GM12878 (cell line): ENCODE measurements at regions of chr5 and their contacts with region 1.

Region 1: GRCh38 chr5:136062366-136063274 is 33.8 kb downstream of the TGFBI start:
- DNase-seq: no peak
- ATAC-seq: peak; percentile 91
- H3K4me3 ChIP-seq: no peak overlapping the region
- H3K27ac ChIP-seq: no peak overlapping the region
- H3K4me1 ChIP-seq: no peaks in the 10 kb centered on the region
- H3K27me3 ChIP-seq: no peaks in the 10 kb centered on the region; a peak in 2 of 4 replicates
- CTCF ChIP-seq: peak; percentile 57 to 65 (median 60)
- EP300 ChIP-seq: no peak
- POLR2A ChIP-seq: no peak
- RAD21 ChIP-seq: peak; percentile 79

Region 2: DNA sequence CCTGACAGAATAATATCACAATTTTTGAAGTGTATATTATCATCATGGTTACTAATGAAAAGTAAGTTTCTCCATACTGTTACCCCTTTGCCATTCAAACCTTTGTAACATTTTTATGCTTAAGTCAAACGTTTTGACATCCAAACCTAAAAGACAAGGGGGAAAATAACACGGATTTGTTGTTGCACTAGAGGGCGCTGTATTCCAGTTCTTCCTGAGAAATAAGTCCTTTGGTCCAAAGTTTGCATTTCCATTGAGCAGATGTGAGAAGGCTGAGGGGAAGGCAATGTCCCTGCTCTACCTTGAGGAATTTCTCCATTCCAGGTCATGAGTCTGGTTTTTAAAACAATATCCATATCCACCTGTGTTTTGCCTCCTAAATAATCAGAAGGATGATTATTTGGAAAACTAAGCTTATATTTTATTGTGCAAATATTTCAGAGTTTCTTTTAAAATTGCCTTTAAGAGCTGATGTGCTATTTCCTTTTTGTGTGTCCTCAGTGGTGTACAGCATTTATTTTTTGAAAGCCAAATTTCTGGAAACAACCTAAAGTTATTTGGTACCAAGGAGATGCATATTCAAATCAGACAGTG is 117.6 kb before region 1 on chr5:
- CTCF ChIA-PET with region 1: interaction called, 26 read pairs
- POLR2A ChIA-PET with region 1: no interaction called
- RAD21 ChIA-PET with region 1: interaction called, 12 read pairs
- SMC1A ChIA-PET with region 1: interaction called, 9 read pairs
- in situ Hi-C with region 1: no loop called
- intact Hi-C with region 1: loop called (anchors 1 kb)
- DNase-seq: no peak
- ATAC-seq: peak; percentile 70
- H3K4me3 ChIP-seq: no peak overlapping the region
- H3K27ac ChIP-seq: no peak overlapping the region
- H3K4me1 ChIP-seq: no peaks in the 10 kb centered on the region
- H3K27me3 ChIP-seq: no peaks in the 10 kb centered on the region; a peak in 2 of 4 replicates
- CTCF ChIP-seq: peak; percentile 60 to 77 (median 66)
- EP300 ChIP-seq: no peak
- POLR2A ChIP-seq: no peak
- RAD21 ChIP-seq: peak; percentile 74

Region 3: DNA sequence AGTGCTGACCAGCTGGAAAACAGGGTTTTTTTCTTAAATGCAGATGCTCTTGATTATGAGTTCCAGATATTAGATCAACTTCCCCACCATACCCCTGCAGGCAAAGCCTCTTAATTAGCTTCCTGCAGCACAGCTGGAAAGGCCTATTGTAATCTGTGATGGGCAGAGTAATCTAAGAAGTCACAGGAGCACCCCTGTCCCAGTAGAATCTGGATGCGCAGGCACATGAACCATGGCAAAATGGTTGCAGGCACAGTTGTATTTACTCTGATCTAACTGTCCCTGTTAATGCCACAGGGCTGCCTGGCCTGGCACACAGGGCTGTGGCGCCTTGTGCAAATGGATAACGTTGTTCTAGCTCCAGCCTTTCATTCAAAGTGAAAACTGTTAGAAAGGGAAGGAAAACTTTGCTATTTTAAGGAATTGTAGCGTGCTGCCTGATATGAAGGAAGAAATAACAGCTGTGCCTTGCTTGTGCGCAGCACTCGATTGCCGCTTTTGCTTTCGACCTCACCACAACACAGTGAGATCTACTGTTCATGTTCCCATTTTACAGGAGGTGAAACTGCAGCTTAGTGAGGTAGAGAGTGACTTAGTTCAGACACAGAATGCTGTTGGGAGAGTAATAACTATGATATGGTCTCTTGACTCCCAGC is 31.5 kb before region 1 on chr5:
- CTCF ChIA-PET with region 1: interaction called, 10 read pairs
- POLR2A ChIA-PET with region 1: no interaction called
- RAD21 ChIA-PET with region 1: interaction called, 7 read pairs
- SMC1A ChIA-PET with region 1: interaction called, 14 read pairs
- in situ Hi-C with region 1: no loop called
- intact Hi-C with region 1: no loop called
- DNase-seq: peak; percentile 57
- ATAC-seq: peak; percentile 90
- H3K4me3 ChIP-seq: no peak overlapping the region
- H3K27ac ChIP-seq: no peak overlapping the region
- H3K4me1 ChIP-seq: peaks cover 11% of the 10 kb centered on the region; the same call in 1 of the 2 replicates
- H3K27me3 ChIP-seq: no peaks in the 10 kb centered on the region; a peak in 1 of 4 replicates
- CTCF ChIP-seq: no peak
- EP300 ChIP-seq: no peak
- POLR2A ChIP-seq: no peak
- RAD21 ChIP-seq: no peak

Region 4: DNA sequence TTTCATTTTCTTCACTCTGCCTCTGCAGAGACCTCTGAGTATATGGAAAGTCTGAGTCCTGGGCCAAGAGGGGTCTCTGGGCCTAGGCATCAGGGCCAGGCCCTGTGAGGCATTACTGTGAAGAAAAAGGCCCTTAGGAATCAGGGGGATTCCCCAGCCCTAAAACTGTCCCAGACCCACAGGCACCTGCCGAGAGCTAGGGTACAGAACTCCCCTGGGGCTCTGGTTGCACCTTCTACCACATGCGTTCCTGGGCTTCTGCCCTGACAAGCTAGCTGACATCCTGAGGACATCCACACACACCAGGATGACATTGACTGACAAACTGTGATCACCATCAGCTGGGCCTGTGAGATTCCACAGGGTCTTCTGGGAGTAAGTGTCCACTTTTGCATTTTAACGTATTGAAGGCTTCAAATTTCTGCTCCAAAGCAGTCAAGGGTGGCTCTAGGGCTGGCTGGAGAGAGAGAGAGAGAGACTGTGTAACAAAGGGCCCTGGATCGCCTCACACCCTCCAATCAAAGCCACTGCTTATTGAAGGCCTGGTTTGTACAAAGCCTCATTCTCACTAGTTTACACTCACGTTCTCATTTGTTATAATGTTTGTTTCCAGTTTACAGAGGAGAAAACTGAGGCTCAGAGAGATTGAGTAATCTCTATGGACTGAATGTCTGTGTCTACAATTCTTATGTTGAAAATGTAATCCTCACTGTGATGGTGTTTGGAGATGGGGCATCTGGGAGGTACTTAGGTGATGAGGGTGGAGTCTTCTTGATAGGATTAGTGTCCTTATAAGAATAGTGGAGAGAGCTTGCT is 11.3 kb after region 1 on chr5:
- CTCF ChIA-PET with region 1: interaction called, 15 read pairs
- POLR2A ChIA-PET with region 1: interaction called, 3 read pairs
- RAD21 ChIA-PET with region 1: interaction called, 7 read pairs
- SMC1A ChIA-PET with region 1: interaction called, 19 read pairs
- in situ Hi-C with region 1: no loop called
- intact Hi-C with region 1: no loop called
- DNase-seq: no peak
- ATAC-seq: peak; percentile 86
- H3K4me3 ChIP-seq: no peak overlapping the region
- H3K27ac ChIP-seq: no peak overlapping the region
- H3K4me1 ChIP-seq: no peaks in the 10 kb centered on the region; the same call in 1 of the 2 replicates
- H3K27me3 ChIP-seq: no peaks in the 10 kb centered on the region; a peak in 1 of 4 replicates
- CTCF ChIP-seq: no peak
- EP300 ChIP-seq: 0 out of 4 replicates have a peak, but pooled peaks of 1 of the 2 experiments have one; percentile 44
- POLR2A ChIP-seq: no peak
- RAD21 ChIP-seq: no peak

Region 5: DNA sequence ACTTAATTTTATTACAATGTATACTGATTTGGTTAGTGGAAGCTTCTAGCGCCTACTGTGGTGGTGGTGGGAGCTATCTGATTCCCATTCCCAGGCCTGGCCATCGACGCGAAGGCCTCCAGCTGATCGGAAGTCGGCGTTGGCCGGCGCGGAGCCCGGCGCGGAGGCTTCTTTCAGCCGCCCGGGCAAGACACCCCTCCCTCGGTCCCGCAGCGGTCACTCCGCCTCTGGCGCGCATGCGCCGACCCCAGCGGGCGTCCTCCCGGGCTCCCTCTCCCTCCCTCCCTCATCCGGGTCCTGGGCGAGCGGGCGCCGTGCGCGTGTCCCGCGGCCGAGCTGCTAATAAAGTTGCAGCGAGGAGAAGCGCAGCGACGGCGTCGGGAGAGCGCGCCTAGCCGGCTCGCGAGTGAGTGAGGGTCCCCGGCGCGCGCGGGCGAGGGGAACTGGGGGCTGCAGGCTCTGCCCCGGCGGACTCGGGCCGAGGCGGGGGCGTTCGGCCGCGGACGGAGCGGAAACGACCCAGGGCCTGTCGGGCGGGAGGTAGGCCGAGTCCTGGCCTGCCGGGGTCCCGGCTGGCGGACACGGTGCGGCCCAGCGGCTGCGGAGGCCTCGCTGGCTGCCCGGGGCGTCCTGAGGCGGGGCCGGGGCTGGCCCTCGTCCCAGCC is 70.1 kb after region 1 on chr5 and contains the start of gene SMAD5:
- CTCF ChIA-PET with region 1: interaction called, 13 read pairs
- POLR2A ChIA-PET with region 1: interaction called, 3 read pairs
- RAD21 ChIA-PET with region 1: interaction called, 4 read pairs
- SMC1A ChIA-PET with region 1: interaction called, 5 read pairs
- in situ Hi-C with region 1: no loop called
- intact Hi-C with region 1: no loop called
- DNase-seq: peak; percentile 65
- ATAC-seq: peak; percentile 95
- H3K4me3 ChIP-seq: peak within 1 kb of the TSS; percentile 76
- H3K27ac ChIP-seq: peak within 1 kb of the TSS; percentile 54; the same call in 1 of the 2 replicates
- H3K4me1 ChIP-seq: peaks cover 3% of the 10 kb centered on the region
- H3K27me3 ChIP-seq: peaks cover 0 to 3% of the 10 kb centered on the region in 2 experiments; a peak in 1 of 4 replicates
- CTCF ChIP-seq: no peak
- EP300 ChIP-seq: no peak
- POLR2A ChIP-seq: peak; percentile 88
- RAD21 ChIP-seq: no peak
- polyA plus RNA-seq, gene SMAD5: 3.6 to 7.1 TPM

Region 6: DNA sequence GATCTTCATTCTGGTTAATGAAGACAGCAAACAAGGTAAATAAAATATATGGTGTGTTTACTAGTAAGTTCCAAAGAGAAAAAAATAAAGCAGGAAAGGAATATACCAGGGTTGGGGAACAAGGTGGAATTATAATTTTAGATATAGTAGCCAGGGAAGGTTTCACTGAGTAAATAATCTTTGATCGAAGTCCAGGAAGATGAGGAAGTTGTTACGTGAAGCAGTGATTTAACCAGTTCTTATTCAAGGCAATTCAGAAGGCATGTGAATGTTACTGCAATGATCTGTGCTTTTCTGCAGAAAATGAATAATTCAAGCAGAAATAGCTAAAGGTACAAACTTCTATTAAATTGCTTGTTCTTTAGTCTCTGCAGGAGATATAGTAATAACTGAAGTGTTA is 124.2 kb after region 1 on chr5:
- CTCF ChIA-PET with region 1: interaction called, 13 read pairs
- POLR2A ChIA-PET with region 1: no interaction called
- RAD21 ChIA-PET with region 1: no interaction called
- SMC1A ChIA-PET with region 1: interaction called, 3 read pairs
- in situ Hi-C with region 1: no loop called
- intact Hi-C with region 1: no loop called
- DNase-seq: no peak
- ATAC-seq: no peak
- H3K4me3 ChIP-seq: no peak overlapping the region
- H3K27ac ChIP-seq: no peak overlapping the region
- H3K4me1 ChIP-seq: no peaks in the 10 kb centered on the region
- H3K27me3 ChIP-seq: peaks cover 0 to under 1% of the 10 kb centered on the region in 2 experiments; a peak in 2 of 4 replicates
- CTCF ChIP-seq: no peak
- EP300 ChIP-seq: no peak
- POLR2A ChIP-seq: no peak
- RAD21 ChIP-seq: no peak